ENCODE measurements at regions of chr5 and their contacts with region 1.

Region 1: GRCh38 chr5:56640763-56641406 is 174.5 kb upstream of the MAP3K1 start:
- DNase-seq: peak; percentile 48
- H3K4me3 ChIP-seq: no peak overlapping the region
- H3K27ac ChIP-seq: no peak overlapping the region
- H3K4me1 ChIP-seq: peaks cover 10% of the 10 kb centered on the region
- CTCF ChIP-seq: no peak

Region 2: DNA sequence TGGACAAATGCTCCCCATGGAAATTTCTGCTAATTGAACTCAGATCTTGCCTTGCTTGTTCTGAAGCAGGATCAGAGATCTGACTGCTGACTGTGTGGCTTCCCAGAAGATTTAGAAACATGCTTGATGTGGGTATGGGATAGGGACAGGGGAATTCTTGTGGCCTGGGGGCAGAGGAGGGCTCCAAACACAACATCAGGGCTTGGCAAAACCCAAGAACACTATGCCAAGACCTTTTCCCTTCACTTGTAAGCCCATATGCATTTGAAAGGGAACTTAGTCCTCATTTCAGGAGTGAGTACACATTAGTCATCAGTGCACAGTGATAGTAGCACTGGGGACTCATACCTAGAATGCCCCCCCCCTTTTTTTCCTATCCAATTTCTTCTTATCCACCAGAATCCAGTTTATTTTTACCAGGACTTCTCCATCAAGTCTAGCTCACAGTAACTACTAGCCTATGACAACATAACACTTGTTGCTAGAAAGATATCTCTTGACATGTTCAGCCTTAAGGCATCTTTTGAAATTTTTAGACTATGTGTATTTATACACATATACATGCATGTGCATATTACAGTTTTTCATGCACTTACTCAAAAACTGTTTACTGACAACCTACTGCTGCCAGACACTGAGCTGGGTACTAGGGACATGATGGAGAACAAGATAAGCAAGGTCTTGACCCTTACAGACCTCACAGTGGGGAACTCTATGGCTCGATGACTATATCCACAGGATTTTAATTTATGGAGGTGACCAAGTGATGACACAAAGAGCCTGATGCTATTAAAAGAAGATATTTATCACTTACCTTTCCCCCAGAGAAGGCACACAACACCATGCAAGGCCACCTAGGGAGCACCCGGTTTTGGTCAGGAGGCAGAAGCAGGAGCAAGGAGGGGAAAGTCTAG is 16.2 kb after region 1 on chr5:
- CTCF ChIA-PET with region 1: no interaction called
- POLR2A ChIA-PET with region 1: interaction called, 12 read pairs
- intact Hi-C with region 1: no loop called
- DNase-seq: no peak
- H3K4me3 ChIP-seq: no peak overlapping the region
- H3K27ac ChIP-seq: no peak overlapping the region
- H3K4me1 ChIP-seq: no peaks in the 10 kb centered on the region
- CTCF ChIP-seq: no peak

Measured in OCI-LY7 (cell line).